Posterior vena cava (tissue), 2 donors: ENCODE measurements at regions of chr12 and their contacts with region 1.

Region 1: GRCh38 chr12:12474931-12475795 is 87.5 kb downstream of the DUSP16 start:
- DNase-seq: no peak

Region 2: DNA sequence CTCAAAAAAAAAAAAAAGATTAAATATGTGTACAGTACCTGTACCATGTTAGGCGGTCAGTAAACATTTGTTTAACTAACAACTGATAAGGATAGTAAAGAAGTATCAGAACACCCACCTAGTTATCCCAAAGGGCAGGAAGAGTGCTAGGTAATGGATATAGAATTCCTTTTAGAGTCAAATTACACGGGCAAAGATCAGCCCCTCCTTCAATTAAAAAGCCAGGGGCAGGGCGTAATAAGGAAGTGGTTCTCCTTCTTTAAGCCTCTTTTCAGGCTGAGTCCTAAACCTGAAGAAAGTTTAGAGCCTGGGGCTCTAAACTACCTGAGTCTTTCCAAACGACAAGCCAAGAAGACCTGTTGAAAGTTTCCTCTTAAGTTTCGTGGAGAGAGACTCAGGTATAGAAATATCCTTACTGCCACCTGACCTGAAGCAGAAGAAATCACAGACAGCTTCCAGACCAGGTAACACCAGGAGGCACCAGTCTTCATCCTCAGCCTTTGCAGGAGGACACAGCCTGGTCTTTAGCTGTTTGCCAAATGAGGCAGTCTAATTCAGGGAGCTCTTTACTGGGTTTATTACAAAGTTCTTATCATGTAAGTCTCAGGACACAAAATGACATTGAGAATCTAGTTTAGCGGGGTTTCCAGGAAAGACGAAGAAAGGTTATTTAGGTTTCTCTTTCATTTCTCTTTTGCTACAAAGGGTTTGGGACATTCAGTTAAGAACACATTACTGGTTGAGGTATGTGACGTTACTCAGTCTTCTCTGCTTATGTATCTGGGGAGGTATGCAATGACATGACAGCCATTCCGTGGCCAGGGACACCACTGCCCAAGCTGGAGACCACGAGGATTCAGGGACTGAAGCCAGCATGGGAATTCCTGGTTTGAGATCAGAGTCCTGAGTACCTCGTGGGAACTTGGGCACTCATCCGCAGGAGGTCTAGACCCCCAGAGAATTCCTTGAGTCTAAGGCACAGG is 404.2 kb before region 1 on chr12 and contains the start of gene BCL2L14:
- intact Hi-C with region 1: no loop called
- DNase-seq: no peak
- total RNA-seq, gene BCL2L14: not detected

Region 3: GRCh38 chr12:12460935-12461922 is 13.9 kb before region 1 on chr12:
- intact Hi-C with region 1: loop called in 1 of 2 experiments (anchors 1 kb)
- DNase-seq: no peak